ENCODE measurements at regions of chr21 and their contacts with region 1.

Region 1: DNA sequence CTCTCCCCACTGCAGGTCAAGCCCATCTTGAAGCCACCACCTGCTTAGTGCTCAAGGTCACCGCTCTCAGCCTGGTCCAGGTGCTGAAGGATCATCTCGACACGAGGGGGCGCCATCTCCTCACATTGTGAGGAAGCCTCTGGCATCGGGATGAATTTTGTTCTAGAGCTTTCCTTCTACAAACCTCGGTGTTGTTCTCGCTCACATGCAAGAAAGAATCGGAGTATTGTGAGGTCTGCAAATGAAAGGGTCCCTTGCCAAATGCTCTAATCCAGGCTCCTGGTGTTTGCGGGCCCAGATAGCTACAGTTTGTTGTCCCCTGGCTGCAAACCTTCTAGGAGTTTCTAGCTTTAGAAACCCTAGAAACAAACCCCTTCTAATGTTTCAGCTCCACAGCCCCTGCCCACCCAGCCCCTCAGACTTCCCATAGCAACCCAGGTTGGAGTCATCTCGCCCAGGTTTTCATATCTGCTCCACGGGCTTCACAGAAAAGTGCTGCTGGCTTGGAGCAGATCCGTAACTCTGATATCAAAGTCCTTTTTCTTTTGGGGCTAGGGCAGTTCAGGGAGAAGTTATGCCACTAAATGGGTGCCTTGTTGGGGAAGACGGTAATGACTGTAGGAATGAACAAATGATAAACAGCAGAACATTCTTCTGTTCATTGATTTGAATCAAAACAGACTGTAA is 8.6 kb upstream of the ATP5PO start:
- DNase-seq: peak; percentile 94
- ATAC-seq: peak; percentile 94
- H3K4me3 Mint-ChIP-seq: no peak overlapping the region
- H3K27ac Mint-ChIP-seq: no peak overlapping the region
- H3K4me1 Mint-ChIP-seq: peaks cover 15% of the 10 kb centered on the region
- H3K27me3 Mint-ChIP-seq: peaks cover 2% of the 10 kb centered on the region

Region 2: DNA sequence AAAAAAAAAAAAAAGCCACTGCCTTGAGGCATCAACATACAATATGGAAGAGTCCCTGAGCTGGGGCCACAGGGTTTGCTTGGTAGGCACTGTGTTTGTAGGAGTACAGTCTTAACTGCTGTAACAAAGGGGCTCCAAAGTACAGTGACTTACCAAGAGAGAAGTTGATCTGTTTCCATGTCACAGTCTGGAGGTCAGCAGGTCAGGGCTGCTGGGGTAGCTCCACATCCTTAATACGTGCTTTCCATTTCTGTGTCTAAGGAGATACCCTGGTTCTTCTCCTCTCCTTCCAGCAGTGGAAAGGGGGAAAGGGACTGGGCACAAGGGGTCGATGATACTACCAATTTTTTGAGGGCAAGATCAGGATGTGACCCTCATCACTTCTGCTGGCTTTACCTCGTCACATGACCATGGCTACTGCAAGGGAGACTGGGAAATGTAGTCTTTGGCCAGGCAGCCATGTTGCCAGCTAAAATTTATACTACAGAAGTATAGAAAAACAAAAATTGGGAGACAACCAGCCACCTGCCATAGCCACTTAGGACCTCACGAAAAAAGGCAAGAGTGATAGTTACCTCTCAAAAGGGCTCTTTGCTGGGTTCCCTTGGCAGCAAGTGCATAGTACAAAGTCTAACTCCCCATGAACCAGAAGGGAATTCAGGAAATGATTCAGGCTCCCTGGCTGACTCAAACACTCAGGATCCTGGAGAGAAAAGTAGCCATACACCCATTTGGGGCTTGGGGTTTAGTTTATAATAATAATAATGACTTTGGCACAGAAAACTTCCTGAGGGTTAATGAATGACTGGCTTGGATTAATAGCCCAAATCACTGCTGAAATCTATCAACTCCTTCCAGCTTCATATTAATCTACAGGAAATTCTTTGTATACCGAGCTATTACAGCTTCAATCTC is 44.1 kb after region 1 on chr21:
- CTCF ChIA-PET with region 1: interaction called, 11 read pairs
- POLR2A ChIA-PET with region 1: interaction called, 3 read pairs
- DNase-seq: peak; percentile 34
- ATAC-seq: no peak
- H3K4me3 Mint-ChIP-seq: no peak overlapping the region
- H3K27ac Mint-ChIP-seq: peak overlapping the region; percentile 19
- H3K4me1 Mint-ChIP-seq: peaks cover 15% of the 10 kb centered on the region
- H3K27me3 Mint-ChIP-seq: no peaks in the 10 kb centered on the region

Region 3: GRCh38 chr21:34073032-34073869 is 149.0 kb after region 1 on chr21 and contains the starts of genes MRPS6 and SLC5A3:
- CTCF ChIA-PET with region 1: interaction called, 63 read pairs
- POLR2A ChIA-PET with region 1: interaction called, 11 read pairs
- DNase-seq: peak; percentile 75
- ATAC-seq: peak; percentile 72
- H3K4me3 Mint-ChIP-seq: peak within 1 kb of the TSS; percentile 92
- H3K27ac Mint-ChIP-seq: peak within 1 kb of the TSS; percentile 75
- H3K4me1 Mint-ChIP-seq: peaks cover 45% of the 10 kb centered on the region
- H3K27me3 Mint-ChIP-seq: peaks cover 4% of the 10 kb centered on the region
- total RNA-seq, gene MRPS6: 80.2 to 84.3 TPM
- total RNA-seq, gene SLC5A3: 22.4 to 24.2 TPM

Region 4: DNA sequence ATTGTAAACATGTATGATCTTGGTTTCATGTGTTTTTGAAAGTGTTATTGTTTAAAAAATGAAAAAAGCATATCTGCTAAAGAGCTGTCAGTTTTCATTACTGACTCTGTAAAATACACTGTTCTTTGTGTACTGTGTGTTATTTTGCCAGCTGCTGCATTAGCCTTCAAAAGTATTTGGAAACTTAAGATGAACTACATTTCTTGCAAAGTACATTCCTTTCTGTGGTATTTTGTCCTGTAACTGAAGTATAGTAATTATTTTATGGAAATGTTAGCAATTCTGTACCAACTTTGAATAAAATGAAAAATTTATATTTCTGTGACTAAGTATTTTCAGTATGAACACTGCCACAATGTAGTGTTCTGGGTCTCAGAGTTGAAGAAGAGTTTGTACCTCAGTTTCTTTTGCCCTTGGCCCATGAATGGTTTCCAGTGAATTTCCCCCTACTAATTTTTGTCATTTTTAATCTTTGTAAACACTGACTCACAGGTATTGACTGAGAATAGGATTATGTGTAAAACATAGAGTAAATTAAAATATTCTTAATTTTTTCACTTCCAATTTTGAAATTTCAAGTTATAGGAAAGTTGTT is 181.8 kb after region 1 on chr21:
- CTCF ChIA-PET with region 1: interaction called, 18 read pairs
- POLR2A ChIA-PET with region 1: no interaction called
- DNase-seq: no peak
- ATAC-seq: no peak
- H3K4me3 Mint-ChIP-seq: no peak overlapping the region
- H3K27ac Mint-ChIP-seq: no peak overlapping the region
- H3K4me1 Mint-ChIP-seq: peaks cover 25% of the 10 kb centered on the region
- H3K27me3 Mint-ChIP-seq: no peaks in the 10 kb centered on the region

Region 5: DNA sequence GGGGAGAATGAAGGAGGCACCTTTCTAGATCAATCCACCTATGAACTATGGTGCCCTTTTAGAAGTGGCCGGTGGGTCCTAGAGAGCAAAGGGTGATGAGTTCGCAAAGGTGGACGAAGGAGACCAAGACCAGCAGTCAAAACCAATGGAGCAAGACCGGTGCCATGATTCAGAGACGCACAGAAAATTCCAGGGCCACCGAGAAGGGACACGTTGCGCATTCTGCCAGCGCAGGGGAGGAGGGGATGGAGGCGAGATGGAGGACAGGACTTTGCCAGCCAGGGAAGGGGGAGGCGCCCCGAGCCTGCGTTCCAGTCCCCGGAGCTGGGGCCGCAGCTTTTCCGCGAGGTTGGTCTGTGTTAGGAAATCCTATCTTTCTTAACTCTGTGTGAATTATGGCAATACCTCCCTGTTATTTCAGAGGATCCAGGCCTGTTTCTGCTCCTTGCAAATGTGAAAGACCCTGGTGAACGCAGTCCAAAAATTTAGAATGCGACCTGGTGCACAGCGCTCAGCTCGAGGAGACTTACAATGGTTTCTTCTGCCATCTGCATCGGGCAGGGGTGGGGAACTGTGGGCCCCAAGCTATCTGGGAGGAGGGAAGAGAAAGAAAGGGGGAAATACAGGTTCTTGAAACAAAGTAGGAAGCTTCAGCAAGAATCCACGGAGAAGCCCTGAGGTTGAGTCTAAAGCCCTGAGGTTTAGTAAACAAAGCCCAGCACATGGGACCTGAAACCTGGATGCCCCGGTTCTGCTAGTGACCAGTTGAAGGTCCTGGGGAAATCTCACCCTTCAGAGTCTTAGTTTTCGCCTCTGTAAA is 278.5 kb after region 1 on chr21:
- CTCF ChIA-PET with region 1: interaction called, 13 read pairs
- POLR2A ChIA-PET with region 1: no interaction called
- DNase-seq: no peak
- ATAC-seq: no peak
- H3K4me3 Mint-ChIP-seq: peak overlapping the region; percentile 73
- H3K27ac Mint-ChIP-seq: no peak overlapping the region
- H3K4me1 Mint-ChIP-seq: peaks cover 60% of the 10 kb centered on the region
- H3K27me3 Mint-ChIP-seq: no peaks in the 10 kb centered on the region

Region 6: GRCh38 chr21:34305605-34306604 is 381.7 kb after region 1 on chr21:
- CTCF ChIA-PET with region 1: no interaction called
- POLR2A ChIA-PET with region 1: no interaction called
- DNase-seq: no peak
- ATAC-seq: no peak
- H3K4me3 Mint-ChIP-seq: no peak overlapping the region
- H3K27ac Mint-ChIP-seq: no peak overlapping the region
- H3K4me1 Mint-ChIP-seq: no peaks in the 10 kb centered on the region
- H3K27me3 Mint-ChIP-seq: peaks cover 9% of the 10 kb centered on the region

Region 7: GRCh38 chr21:34362136-34362444 is 437.9 kb after region 1 on chr21:
- CTCF ChIA-PET with region 1: interaction called, 34 read pairs
- POLR2A ChIA-PET with region 1: no interaction called
- DNase-seq: no peak
- ATAC-seq: peak; percentile 26
- H3K4me3 Mint-ChIP-seq: no peak overlapping the region
- H3K27ac Mint-ChIP-seq: no peak overlapping the region
- H3K4me1 Mint-ChIP-seq: peaks cover 7% of the 10 kb centered on the region
- H3K27me3 Mint-ChIP-seq: peaks cover 11% of the 10 kb centered on the region

Measured in activated CD8-positive, alpha-beta T cell treated with anti-CD3 and anti-CD28 coated beads, Interleukin-2, amount 10 ng/mL, durations not matched to agents 7 days and 5 days (primary cell).